ENCODE measurements at regions of chr16 and their contacts with region 1.

Region 1: DNA sequence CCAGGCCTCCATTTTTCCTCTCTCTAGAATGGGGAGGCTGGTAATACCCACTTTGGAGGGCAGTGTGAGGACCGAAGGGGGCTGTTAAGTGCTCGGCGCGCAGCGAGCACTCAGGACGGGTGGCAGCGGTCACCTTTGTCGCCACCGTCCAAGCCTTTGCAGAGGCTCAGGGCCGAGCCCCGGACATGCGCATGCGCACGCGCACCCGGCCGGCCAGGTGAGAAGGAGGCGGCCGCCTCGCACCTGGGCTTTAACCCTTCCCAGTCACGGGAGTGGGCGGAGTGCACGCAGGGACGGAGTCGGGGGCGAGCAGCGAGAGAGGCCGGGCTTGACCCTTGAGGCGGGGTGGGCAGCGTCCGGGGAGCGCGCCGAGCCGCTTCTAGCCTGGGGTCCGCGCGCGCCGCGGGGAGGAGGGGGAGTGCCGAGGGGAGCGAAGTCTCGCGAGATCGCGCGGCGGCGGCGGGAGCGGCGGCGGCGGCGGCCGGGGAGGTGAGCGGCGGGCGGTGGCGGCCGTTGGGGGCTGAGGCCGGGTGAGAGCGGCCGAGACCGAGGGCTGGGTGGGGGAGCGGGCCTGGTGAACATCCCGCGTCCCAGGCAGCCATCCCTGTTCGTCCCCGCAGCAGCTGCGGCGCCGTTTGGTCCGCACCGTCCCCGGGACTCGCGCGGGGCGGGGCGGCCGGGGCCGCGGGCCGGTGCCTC is at the start of gene MRTFB:
- DNase-seq: peak; percentile 89
- ATAC-seq: peak; percentile 95
- total RNA-seq, gene MRTFB: 22.1 TPM

Region 2: DNA sequence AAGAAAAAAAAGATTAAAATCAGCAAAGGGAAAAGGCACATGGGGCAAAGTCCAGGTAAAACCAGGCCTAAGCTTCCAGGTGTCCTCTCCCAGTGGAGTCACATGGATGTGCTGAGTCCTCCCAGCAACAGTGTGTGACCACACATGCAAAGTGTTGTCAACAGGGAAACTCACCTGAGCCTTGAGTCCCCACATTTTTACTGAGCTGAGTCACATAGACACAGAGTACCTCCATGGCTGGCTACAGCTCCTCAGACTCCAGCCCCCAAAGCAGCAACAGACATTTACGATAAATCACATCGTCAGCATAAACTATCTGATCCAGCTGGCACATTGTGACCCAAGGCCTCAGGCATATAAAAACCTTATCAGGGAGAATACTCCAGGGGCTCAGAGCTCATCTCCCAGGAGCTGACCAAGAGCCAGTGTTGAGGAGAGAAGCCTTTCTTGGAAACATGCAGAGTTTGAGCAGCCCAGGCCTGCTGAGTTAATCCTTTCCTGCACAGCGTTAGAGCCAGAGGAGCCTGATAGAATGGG is 130.6 kb before region 1 on chr16:
- intact Hi-C with region 1: loop called (anchors 10 kb)
- DNase-seq: no peak
- ATAC-seq: no peak